GM12878 (cell line): ENCODE measurements at regions of chr3 and their contacts with region 1.

Region 1: GRCh38 chr3:44954962-44955361 is 21.0 kb downstream of the ZDHHC3 start:
- DNase-seq: no peak
- ATAC-seq: peak; percentile 94
- H3K4me3 ChIP-seq: no peak overlapping the region
- H3K27ac ChIP-seq: no peak overlapping the region
- H3K4me1 ChIP-seq: peaks cover 8% of the 10 kb centered on the region
- H3K27me3 ChIP-seq: no peaks in the 10 kb centered on the region
- CTCF ChIP-seq: no peak
- EP300 ChIP-seq: peak in 1 of 2 experiments; percentile 60; a peak in 1 of 4 replicates
- POLR2A ChIP-seq: no peak
- RAD21 ChIP-seq: no peak

Region 2: DNA sequence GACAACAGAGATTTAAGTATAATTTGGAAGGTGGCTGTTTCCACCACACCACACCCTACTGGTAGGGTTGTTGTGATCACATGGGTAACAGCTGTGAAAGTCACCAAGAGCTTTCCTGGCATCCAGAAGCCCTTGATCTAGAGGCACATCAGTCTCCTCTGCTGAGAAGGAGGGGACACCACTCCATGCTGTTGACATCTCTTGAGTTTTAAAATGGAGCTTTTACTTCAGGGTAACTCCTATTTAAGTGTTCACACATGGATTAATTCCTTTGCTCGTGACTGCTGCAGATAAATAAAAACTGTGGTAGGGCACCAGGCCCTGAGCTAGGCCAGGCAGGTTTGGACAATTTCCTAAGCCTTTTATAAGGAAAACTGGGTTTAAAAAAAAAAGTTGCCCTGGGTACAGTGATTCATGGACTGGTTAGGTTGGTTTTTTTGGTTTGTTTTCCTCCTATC is 28.6 kb after region 1 on chr3:
- CTCF ChIA-PET with region 1: interaction called, 3 read pairs
- POLR2A ChIA-PET with region 1: no interaction called
- RAD21 ChIA-PET with region 1: interaction called, 18 read pairs
- SMC1A ChIA-PET with region 1: no interaction called
- in situ Hi-C with region 1: no loop called
- intact Hi-C with region 1: no loop called
- DNase-seq: no peak
- ATAC-seq: peak; percentile 4; the same call in 1 of the 3 replicates
- H3K4me3 ChIP-seq: no peak overlapping the region
- H3K27ac ChIP-seq: peak overlapping the region; percentile 36
- H3K4me1 ChIP-seq: peaks cover 25% of the 10 kb centered on the region
- H3K27me3 ChIP-seq: no peaks in the 10 kb centered on the region
- CTCF ChIP-seq: no peak
- EP300 ChIP-seq: no peak
- POLR2A ChIP-seq: no peak
- RAD21 ChIP-seq: no peak

Region 3: GRCh38 chr3:45182915-45183867 is 228.2 kb after region 1 on chr3:
- CTCF ChIA-PET with region 1: no interaction called
- POLR2A ChIA-PET with region 1: no interaction called
- RAD21 ChIA-PET with region 1: no interaction called
- SMC1A ChIA-PET with region 1: no interaction called
- in situ Hi-C with region 1: no loop called
- intact Hi-C with region 1: no loop called
- DNase-seq: no peak
- ATAC-seq: peak; percentile 59
- H3K4me3 ChIP-seq: no peak overlapping the region
- H3K27ac ChIP-seq: no peak overlapping the region
- H3K4me1 ChIP-seq: no peaks in the 10 kb centered on the region; the same call in 1 of the 2 replicates
- H3K27me3 ChIP-seq: peaks cover 0 to 3% of the 10 kb centered on the region in 2 experiments; a peak in 2 of 4 replicates
- CTCF ChIP-seq: no peak
- EP300 ChIP-seq: no peak
- POLR2A ChIP-seq: no peak
- RAD21 ChIP-seq: no peak